ENCODE measurements at regions of chr17 and their contacts with region 1.

Region 1: GRCh38 chr17:40355123-40355803 is 9.3 kb downstream of the GJD3 start:
- DNase-seq: peak; percentile 86
- ATAC-seq: peak; percentile 78
- H3K4me3 Mint-ChIP-seq: no peak overlapping the region
- H3K27ac Mint-ChIP-seq: peak overlapping the region; percentile 59
- H3K4me1 Mint-ChIP-seq: peaks cover 44% of the 10 kb centered on the region
- H3K27me3 Mint-ChIP-seq: no peaks in the 10 kb centered on the region
- CTCF ChIP-seq: peak; percentile 53

Region 2: GRCh38 chr17:40203131-40203530 is 152.1 kb before region 1 on chr17:
- CTCF ChIA-PET with region 1: interaction called, 10 read pairs
- POLR2A ChIA-PET with region 1: no interaction called
- intact Hi-C with region 1: loop called (anchors 5 kb)
- DNase-seq: no peak
- ATAC-seq: no peak
- H3K4me3 Mint-ChIP-seq: no peak overlapping the region
- H3K27ac Mint-ChIP-seq: no peak overlapping the region
- H3K4me1 Mint-ChIP-seq: peaks cover 4% of the 10 kb centered on the region
- H3K27me3 Mint-ChIP-seq: no peaks in the 10 kb centered on the region
- CTCF ChIP-seq: no peak

Region 3: GRCh38 chr17:40303009-40303657 is 52.1 kb before region 1 on chr17:
- CTCF ChIA-PET with region 1: interaction called, 466 read pairs
- POLR2A ChIA-PET with region 1: interaction called, 29 read pairs
- intact Hi-C with region 1: loop called (anchors 1 kb)
- DNase-seq: no peak
- ATAC-seq: peak; percentile 83
- H3K4me3 Mint-ChIP-seq: no peak overlapping the region
- H3K27ac Mint-ChIP-seq: no peak overlapping the region
- H3K4me1 Mint-ChIP-seq: peaks cover 7% of the 10 kb centered on the region
- H3K27me3 Mint-ChIP-seq: no peaks in the 10 kb centered on the region
- CTCF ChIP-seq: no peak

Region 4: DNA sequence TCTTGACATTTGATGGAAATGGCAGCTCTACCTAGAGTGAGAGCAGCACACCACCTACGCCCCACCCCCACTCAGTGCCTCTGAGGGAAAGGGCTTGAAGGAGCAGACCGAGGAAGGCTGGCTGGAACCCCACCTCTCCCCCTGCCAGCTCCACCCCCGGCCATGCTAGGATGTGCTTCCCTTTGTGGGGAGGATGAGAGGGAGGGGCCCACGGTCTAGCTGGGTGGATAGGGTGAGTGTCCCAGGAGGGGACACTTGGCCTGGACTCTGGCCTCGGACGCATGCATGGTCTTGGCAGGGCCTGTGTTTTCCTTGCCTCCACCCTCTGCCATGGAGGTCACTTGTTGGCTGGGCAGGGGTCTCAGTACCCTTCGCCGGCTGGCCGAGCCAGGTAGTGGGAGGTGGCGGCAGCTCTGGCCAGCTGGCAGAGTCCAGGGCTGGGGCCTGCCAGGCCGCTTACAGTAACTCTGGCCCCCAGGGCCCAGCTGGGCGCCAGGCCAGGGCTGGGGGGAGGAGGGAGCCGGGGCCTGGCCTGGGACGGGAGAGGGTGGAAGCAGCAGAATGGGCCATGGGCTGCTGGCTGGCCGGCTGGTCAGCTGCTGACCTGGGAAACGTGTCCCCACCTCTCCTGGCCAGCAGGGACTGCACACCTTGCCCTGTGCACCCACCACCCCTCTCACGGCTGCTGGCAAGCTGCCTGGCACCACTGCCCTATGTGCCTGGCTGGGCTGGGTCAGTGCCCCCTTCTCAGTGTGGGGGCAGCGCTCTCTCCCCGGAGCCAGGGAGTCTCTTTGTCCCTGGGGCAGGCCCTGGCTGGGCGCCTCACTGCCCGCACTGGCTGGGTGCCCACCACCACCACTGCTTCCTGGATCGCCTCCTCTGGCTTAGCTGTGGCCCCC is 23.3 kb before region 1 on chr17:
- CTCF ChIA-PET with region 1: interaction called, 53 read pairs
- POLR2A ChIA-PET with region 1: interaction called, 17 read pairs
- intact Hi-C with region 1: no loop called
- DNase-seq: no peak
- ATAC-seq: no peak
- H3K4me3 Mint-ChIP-seq: no peak overlapping the region
- H3K27ac Mint-ChIP-seq: peak overlapping the region; percentile 50
- H3K4me1 Mint-ChIP-seq: peaks cover 78% of the 10 kb centered on the region
- H3K27me3 Mint-ChIP-seq: no peaks in the 10 kb centered on the region
- CTCF ChIP-seq: no peak

Region 5: GRCh38 chr17:40340880-40341807 is 14.1 kb before region 1 on chr17:
- CTCF ChIA-PET with region 1: interaction called, 18 read pairs
- POLR2A ChIA-PET with region 1: interaction called, 7 read pairs
- intact Hi-C with region 1: loop called (anchors 1 kb)
- DNase-seq: peak; percentile 82
- ATAC-seq: peak; percentile 83
- H3K4me3 Mint-ChIP-seq: peak overlapping the region; percentile 85
- H3K27ac Mint-ChIP-seq: peak overlapping the region; percentile 81
- H3K4me1 Mint-ChIP-seq: peaks cover 77% of the 10 kb centered on the region
- H3K27me3 Mint-ChIP-seq: no peaks in the 10 kb centered on the region
- CTCF ChIP-seq: no peak

Region 6: DNA sequence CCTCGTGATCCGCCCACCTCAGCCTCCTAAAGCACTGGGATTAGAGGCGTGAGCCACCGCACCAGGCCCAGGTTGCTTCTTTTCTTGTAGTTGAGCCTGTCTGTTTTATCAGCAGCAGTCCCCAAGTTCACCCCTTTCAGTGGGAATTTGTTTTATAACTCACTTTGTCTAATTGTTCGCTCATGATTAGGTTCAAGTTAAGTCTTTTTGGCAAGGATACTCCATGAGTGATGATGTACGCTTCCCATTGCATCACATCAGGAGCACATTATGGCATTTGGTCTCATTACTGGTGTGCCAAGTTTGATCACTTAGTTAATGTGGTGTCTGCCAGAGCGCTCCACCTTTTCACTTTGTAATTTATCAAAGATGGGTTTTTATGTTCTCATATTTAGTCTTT is 23.7 kb after region 1 on chr17:
- CTCF ChIA-PET with region 1: no interaction called
- POLR2A ChIA-PET with region 1: no interaction called
- intact Hi-C with region 1: no loop called
- DNase-seq: no peak
- ATAC-seq: no peak
- H3K4me3 Mint-ChIP-seq: no peak overlapping the region
- H3K27ac Mint-ChIP-seq: no peak overlapping the region
- H3K4me1 Mint-ChIP-seq: peaks cover 3% of the 10 kb centered on the region
- H3K27me3 Mint-ChIP-seq: peaks cover 3% of the 10 kb centered on the region
- CTCF ChIP-seq: no peak